ENCODE measurements at regions of chr9 and their contacts with region 1.

Region 1: DNA sequence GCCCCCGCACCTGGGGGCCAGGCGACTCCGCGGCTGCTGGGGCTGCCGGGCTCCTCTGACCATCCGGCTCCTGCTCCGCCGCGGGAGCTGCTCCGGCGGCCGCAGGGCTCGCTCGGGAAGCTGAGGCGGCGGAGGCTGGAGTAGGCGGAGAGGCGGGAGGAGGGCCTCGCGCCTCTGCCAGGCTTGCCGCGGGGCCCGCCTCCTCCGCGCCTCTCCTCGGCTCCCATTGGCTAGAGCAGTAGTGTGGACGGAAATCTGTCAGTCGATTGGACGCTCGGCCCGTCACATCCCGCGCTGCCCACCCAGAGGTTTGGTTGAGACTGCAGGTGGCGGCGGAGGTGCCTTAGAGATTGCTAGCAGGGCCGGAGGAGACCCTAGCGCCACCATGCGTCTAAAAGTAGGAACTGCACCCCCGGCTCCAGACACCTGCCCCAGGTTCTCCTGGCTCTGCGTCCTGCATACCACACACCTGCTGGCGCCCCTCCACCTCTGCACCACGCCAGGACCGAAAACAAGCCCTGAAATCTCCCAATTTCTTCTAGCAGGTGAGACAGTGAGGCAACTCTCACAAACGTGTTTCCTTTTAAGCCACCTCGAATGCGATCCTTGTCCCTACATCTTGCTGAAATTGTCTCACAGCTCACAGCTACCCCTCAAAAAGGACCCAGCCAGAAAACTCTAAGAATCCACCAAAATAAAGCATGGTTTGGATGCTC is at the start of gene SCAI:
- DNase-seq: peak; percentile 89
- H3K4me3 ChIP-seq: peak within 1 kb of the TSS; percentile 78
- H3K27me3 ChIP-seq: no peaks in the 10 kb centered on the region
- CTCF ChIP-seq: peak; percentile 99
- polyA plus RNA-seq, gene SCAI: 2.0 and 4.4 TPM in 2 replicates

Region 2: GRCh38 chr9:125153712-125154367 is 10.3 kb after region 1 on chr9:
- CTCF ChIA-PET with region 1: interaction called, 10 read pairs
- POLR2A ChIA-PET with region 1: no interaction called
- DNase-seq: no peak
- H3K4me3 ChIP-seq: no peak overlapping the region
- H3K27me3 ChIP-seq: no peaks in the 10 kb centered on the region
- CTCF ChIP-seq: no peak

Region 3: DNA sequence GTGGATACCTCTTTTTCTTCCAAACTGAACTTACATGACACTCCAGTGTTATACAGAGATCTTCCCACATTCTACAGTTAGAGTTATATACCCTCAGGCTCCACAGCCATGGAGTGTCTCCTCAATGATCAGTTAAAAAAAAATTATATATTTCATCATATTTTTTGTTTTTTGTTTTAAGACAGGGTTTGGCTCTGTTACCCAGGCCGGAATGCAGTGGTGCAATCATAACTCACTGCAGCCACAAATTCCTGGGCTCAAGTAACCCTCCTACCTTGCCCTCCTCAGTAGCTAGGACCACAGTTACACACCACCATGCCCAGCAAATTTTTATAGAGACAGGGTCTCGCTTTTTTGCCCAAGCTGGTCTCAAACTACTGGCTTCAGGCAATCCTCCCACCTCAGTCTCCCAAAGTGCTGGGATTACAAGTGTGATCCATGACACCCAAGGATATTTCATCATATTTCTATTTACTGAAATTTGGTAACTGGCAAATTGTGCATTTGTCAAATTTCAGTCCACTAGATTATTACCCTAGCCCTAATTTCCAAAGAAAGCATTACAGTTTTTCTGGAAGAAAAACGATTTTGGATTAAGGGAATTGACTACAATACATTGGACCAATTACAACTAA is 17.9 kb after region 1 on chr9:
- CTCF ChIA-PET with region 1: interaction called, 13 read pairs
- POLR2A ChIA-PET with region 1: no interaction called
- DNase-seq: peak; percentile 31
- H3K4me3 ChIP-seq: no peak overlapping the region
- H3K27me3 ChIP-seq: no peaks in the 10 kb centered on the region
- CTCF ChIP-seq: no peak

Measured in BJ (cell line).